Activated CD4-positive, alpha-beta T cell treated with anti-CD3 and anti-CD28 coated beads for 36 hours (primary cell): ENCODE measurements at regions of chr11 and their contacts with region 1.

Region 1: GRCh38 chr11:9060700-9061111 is 30.7 kb downstream of the SCUBE2 start:
- DNase-seq: peak; percentile 88
- ATAC-seq: peak; percentile 100
- H3K4me3 Mint-ChIP-seq: no peak overlapping the region
- H3K27ac Mint-ChIP-seq: peak overlapping the region; percentile 29
- H3K4me1 Mint-ChIP-seq: peaks cover 13% of the 10 kb centered on the region
- H3K27me3 Mint-ChIP-seq: peaks cover 25% of the 10 kb centered on the region

Region 2: DNA sequence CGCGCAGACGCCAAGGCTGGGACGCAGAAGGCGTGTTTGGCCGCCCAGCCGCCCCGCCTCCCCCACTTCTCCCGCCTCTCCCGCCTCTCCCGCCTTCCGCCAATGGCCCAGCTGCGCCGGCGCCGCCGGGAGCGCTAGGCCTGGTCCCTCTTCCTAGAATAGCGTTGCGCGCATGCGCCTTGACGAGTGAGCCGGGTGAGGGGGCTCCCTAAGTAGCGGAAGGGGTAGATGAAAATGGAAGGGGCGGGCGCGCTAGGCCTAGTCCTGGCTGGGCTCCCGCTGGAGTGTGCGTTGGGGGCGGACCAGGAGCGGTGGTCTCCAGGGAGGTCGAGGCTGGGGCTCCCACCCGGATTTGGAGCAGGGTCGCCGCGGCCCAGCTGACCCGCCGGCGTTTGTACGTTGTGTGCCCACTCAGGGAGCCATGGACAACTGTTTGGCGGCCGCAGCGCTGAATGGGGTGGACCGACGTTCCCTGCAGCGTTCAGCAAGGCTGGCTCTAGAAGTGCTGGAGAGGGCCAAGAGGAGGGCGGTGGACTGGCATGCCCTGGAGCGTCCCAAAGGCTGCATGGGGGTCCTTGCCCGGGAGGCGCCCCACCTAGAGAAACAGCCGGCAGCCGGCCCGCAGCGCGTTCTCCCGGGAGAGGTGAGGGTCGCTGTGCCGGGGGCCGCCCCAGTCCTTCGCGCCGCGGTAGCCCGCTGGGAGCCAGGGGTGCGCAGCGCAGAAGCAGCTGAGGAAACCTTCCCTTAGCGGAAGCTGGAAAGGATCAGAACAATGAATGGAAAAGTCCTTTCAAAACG is 149.5 kb before region 1 on chr11 and contains the start of gene AKIP1:
- CTCF ChIA-PET with region 1: no interaction called
- POLR2A ChIA-PET with region 1: no interaction called
- intact Hi-C with region 1: loop called (anchors 5 kb)
- DNase-seq: peak; percentile 94
- ATAC-seq: peak; percentile 76
- H3K4me3 Mint-ChIP-seq: peak within 1 kb of the TSS; percentile 86
- H3K27ac Mint-ChIP-seq: peak within 1 kb of the TSS; percentile 89
- H3K4me1 Mint-ChIP-seq: peaks cover 45% of the 10 kb centered on the region
- H3K27me3 Mint-ChIP-seq: peaks cover 6% of the 10 kb centered on the region
- total RNA-seq, gene AKIP1: 29.8 to 32.2 TPM

Region 3: DNA sequence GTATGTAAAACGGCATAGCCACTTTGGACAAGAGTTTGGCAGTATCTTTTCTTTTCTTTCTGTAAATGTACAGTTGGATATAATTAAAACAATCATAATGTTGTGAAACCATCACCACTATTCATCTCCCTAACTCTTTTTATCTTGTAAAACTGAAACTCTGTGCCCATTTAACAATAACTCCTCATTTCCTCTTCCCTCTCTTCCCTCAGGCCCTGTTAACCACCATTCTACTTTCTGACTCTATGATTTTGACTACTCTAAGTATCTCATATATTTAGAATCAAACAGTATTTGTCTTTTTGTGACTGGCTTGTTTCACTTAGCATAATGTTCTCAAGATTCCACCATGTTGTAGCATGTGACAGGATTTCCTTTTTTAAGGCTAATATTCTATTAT is 20.4 kb after region 1 on chr11:
- CTCF ChIA-PET with region 1: interaction called, 4 read pairs
- POLR2A ChIA-PET with region 1: no interaction called
- intact Hi-C with region 1: loop called in 1 of 2 experiments (anchors 2 kb)
- DNase-seq: no peak
- ATAC-seq: peak; percentile 53
- H3K4me3 Mint-ChIP-seq: no peak overlapping the region
- H3K27ac Mint-ChIP-seq: no peak overlapping the region
- H3K4me1 Mint-ChIP-seq: peaks cover 3% of the 10 kb centered on the region
- H3K27me3 Mint-ChIP-seq: peaks cover 7% of the 10 kb centered on the region

Region 4: GRCh38 chr11:9739123-9739894 is 678.6 kb after region 1 on chr11:
- CTCF ChIA-PET with region 1: no interaction called
- POLR2A ChIA-PET with region 1: no interaction called
- intact Hi-C with region 1: no loop called
- DNase-seq: no peak
- ATAC-seq: peak; percentile 78
- H3K4me3 Mint-ChIP-seq: no peak overlapping the region
- H3K27ac Mint-ChIP-seq: peak overlapping the region; percentile 9
- H3K4me1 Mint-ChIP-seq: peaks cover 10% of the 10 kb centered on the region
- H3K27me3 Mint-ChIP-seq: no peaks in the 10 kb centered on the region